Common myeloid progenitor, CD34-positive (primary cell): ENCODE measurements at regions of chr21 and their contacts with region 1.

Region 1: DNA sequence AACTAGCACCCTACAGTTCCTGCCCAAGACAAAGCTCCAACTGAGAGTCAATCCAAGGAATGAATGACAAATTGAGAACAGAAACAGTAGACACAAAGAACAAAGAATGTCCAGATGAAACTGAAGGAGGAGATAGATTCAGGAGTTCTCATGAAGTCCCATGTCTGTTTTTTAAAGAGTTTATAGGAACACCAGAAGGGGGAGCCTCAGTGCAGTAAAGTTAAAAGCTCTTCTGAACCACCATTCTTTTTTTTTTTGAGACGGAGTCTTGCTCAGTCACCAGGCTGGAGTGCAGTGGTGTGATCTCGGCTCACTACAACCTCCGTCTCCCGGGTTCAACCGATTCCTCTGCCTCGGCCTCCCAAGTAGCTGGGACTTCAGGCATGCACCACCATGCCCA is 323.6 kb downstream of the MRPL39 start:
- DNase-seq: peak; percentile 57 to 72 (median 64)
- H3K4me3 ChIP-seq: no peak overlapping the region
- H3K27ac ChIP-seq: no peak overlapping the region
- H3K4me1 ChIP-seq: no peaks in the 10 kb centered on the region
- H3K27me3 ChIP-seq: no peaks in the 10 kb centered on the region

Region 2: GRCh38 chr21:25029580-25029979 is 254.1 kb before region 1 on chr21:
- CTCF ChIA-PET with region 1: no interaction called
- POLR2A ChIA-PET with region 1: no interaction called
- DNase-seq: no peak
- H3K4me3 ChIP-seq: no peak overlapping the region
- H3K27ac ChIP-seq: no peak overlapping the region
- H3K4me1 ChIP-seq: no peaks in the 10 kb centered on the region
- H3K27me3 ChIP-seq: no peaks in the 10 kb centered on the region

Region 3: GRCh38 chr21:25054689-25055088 is 229.0 kb before region 1 on chr21:
- CTCF ChIA-PET with region 1: no interaction called
- POLR2A ChIA-PET with region 1: no interaction called
- DNase-seq: no peak
- H3K4me3 ChIP-seq: no peak overlapping the region
- H3K27ac ChIP-seq: no peak overlapping the region
- H3K4me1 ChIP-seq: no peaks in the 10 kb centered on the region
- H3K27me3 ChIP-seq: no peaks in the 10 kb centered on the region

Region 4: DNA sequence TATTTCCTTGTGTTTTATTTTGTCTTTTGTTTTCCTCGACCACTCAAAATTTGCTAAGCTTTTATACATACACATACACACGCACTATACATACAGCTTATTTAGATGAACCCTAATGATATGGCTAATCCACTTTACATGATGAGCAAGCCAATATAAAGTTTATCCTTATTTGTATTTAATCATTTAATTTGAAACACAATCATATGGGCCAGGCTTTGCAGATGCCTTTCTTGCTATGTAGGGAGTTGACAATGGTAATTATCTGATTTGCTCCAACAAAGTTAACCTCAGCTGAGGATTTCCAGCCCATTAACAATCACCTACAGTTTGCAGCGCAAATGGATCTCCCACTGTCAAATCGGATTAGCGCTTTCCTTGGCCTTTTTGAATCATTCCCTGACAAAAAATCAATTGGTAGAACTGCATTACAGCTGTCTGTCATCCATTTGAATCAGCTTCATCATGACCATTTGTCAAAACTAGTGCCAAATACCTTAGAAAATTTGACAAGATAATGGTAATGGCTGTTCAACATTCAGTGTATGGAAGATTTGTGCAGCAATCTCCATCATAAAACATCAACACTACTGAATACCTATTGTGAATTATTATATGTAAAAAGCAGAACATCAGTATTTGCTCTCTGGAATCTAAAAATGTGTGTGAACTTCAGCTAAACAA is 29.1 kb before region 1 on chr21:
- CTCF ChIA-PET with region 1: no interaction called
- POLR2A ChIA-PET with region 1: no interaction called
- DNase-seq: no peak
- H3K4me3 ChIP-seq: no peak overlapping the region
- H3K27ac ChIP-seq: no peak overlapping the region
- H3K4me1 ChIP-seq: no peaks in the 10 kb centered on the region
- H3K27me3 ChIP-seq: no peaks in the 10 kb centered on the region

Region 5: GRCh38 chr21:25298512-25299491 is 15.1 kb after region 1 on chr21:
- CTCF ChIA-PET with region 1: interaction called, 12 read pairs
- POLR2A ChIA-PET with region 1: no interaction called
- DNase-seq: peak; percentile 8 to 80 (median 69)
- H3K4me3 ChIP-seq: no peak overlapping the region
- H3K27ac ChIP-seq: no peak overlapping the region
- H3K4me1 ChIP-seq: peaks cover 8 to 39% (median 17%) of the 10 kb centered on the region in 4 experiments
- H3K27me3 ChIP-seq: no peaks in the 10 kb centered on the region

Region 6: DNA sequence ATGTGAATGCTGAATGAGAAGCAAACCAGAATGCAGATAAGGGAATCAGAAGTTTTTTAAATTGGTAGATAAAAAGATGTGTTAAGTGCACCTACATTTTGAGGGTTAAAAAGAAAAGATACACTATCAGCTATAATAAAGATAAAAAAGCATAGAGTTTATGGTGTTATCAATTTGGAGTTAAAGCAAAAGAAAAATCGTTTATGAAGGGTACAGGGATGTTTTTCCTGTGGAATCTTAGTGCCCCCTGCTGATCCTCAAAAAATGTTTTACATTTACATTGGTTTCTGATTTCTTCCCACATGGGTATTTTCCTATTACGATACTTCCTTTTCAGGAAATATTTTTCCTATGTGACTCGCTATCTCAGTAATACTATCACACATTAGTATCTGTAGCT is 30.1 kb after region 1 on chr21:
- CTCF ChIA-PET with region 1: interaction called, 20 read pairs
- POLR2A ChIA-PET with region 1: no interaction called
- DNase-seq: peak; percentile 12 to 52 (median 32)
- H3K4me3 ChIP-seq: no peak overlapping the region
- H3K27ac ChIP-seq: no peak overlapping the region
- H3K4me1 ChIP-seq: no peaks in the 10 kb centered on the region
- H3K27me3 ChIP-seq: no peaks in the 10 kb centered on the region

Region 7: GRCh38 chr21:25385911-25386474 is 102.3 kb after region 1 on chr21:
- CTCF ChIA-PET with region 1: interaction called, 11 read pairs
- POLR2A ChIA-PET with region 1: no interaction called
- DNase-seq: peak; percentile 51 to 62 (median 60)
- H3K4me3 ChIP-seq: no peak overlapping the region
- H3K27ac ChIP-seq: no peak overlapping the region
- H3K4me1 ChIP-seq: no peaks in the 10 kb centered on the region
- H3K27me3 ChIP-seq: no peaks in the 10 kb centered on the region